ENCODE measurements at regions of chr3 and their contacts with region 1.

Region 1: DNA sequence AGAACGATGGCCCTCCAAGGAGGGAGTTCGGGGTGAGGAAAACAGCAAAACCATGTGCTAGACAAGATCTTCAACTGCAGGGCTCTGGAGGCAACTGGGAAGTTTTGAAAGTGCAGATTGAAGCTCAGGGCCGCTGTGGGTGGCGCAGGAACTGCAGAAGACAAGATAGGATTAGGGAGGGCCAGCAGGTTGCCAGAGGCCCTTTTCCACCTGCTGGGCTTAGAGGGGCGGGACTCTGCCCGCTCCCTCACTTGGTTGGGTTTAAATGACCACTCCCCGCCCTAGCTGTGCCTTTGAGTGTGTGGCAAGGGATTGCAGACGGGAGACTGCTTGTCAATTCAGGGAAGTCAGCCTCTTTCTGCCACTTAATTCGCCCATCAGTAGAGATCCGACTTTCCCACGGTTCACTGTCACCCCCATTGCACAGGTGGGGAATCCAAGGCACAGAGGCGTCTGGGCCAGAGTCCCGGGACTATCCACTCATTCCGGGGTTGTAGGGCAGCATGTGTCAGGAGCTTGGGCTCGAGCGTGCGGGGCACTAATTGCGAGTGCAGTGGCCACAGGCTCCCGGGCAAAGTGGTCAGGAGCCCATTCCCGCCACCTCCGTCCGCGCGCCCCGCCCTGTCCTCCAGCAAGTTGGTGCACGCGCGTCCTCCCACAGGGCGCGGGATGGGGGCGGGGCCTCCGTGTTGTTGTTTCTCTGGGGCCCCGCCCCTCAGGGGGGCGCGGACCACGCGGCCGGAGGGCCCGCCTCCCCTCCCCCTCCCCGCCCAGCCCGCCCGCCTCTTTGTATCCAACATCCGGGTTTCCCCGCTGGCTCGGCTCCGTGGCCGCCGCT is at the start of gene ACVR2B:
- DNase-seq: peak; percentile 95
- H3K4me3 ChIP-seq: peak within 1 kb of the TSS; percentile 81 to 93 (median 86)
- H3K27ac ChIP-seq: peak within 1 kb of the TSS; percentile 88 to 92 (median 90)
- H3K4me1 ChIP-seq: peaks cover 0 to 36% (median 31%) of the 10 kb centered on the region in 4 donors
- H3K27me3 ChIP-seq: no peaks in the 10 kb centered on the region
- CTCF ChIP-seq: no peak
- EP300 ChIP-seq: no peak
- POLR2A ChIP-seq: no peak
- total RNA-seq, gene ACVR2B: 4.8 to 9.1 (median 6.7) TPM

Region 2: GRCh38 chr3:38136777-38137614 is 316.3 kb before region 1 on chr3 and contains the start of gene ACAA1:
- intact Hi-C with region 1: loop called (anchors 5 kb)
- DNase-seq: peak; percentile 100
- H3K4me3 ChIP-seq: peak within 1 kb of the TSS; percentile 72 to 96 (median 89)
- H3K27ac ChIP-seq: peak within 1 kb of the TSS; percentile 89 to 97 (median 94)
- H3K4me1 ChIP-seq: peaks cover 0 to 60% (median 37%) of the 10 kb centered on the region in 4 donors
- H3K27me3 ChIP-seq: no peaks in the 10 kb centered on the region
- CTCF ChIP-seq: no peak
- EP300 ChIP-seq: no peak
- POLR2A ChIP-seq: peak; percentile 82 to 89
- total RNA-seq, gene ACAA1: 42.6 to 53.2 (median 47.6) TPM

Region 3: DNA sequence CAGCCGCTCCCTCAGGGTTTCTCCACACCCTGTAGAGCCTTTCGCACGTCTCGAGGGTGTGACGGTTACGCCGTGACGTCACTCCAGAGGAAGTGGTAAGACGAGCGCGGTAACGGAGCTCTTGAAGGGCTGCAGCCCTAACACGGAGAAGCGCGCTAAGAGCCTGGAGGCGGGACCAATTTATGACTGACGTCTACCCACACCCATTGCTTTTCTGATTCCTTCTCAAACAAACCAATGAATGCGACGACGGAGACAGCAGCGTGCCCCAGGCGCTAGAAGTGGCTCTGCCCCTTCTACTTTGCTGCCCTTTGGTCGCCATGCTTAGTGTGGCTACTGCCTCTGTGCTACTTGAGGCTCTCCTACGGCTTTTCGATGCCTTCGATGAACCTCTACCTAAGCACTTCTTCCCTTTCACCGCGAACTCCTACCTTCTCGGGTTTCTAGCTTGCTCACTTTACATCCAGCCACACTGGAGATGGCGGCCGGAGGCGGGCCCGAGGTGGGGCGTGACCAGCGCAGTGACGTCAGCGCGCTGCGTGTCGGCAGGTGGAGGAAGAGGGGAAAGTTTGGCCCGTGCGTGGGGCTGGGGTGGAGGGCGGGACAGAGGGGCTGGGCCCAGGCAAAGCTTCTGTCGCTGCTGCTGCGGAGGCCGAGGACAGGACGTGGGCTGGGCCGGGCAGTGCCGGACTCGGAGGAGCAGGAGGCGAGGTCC is 288.2 kb before region 1 on chr3 and contains the start of gene OXSR1:
- intact Hi-C with region 1: loop called (anchors 10 kb)
- DNase-seq: peak; percentile 100
- H3K4me3 ChIP-seq: peak within 1 kb of the TSS; percentile 73 to 98 (median 93)
- H3K27ac ChIP-seq: peak within 1 kb of the TSS; percentile 92 to 99 (median 98)
- H3K4me1 ChIP-seq: peaks cover 0 to 20% (median 19%) of the 10 kb centered on the region in 4 donors
- H3K27me3 ChIP-seq: no peaks in the 10 kb centered on the region
- CTCF ChIP-seq: no peak
- EP300 ChIP-seq: peak in 2 of 4 donors; percentile 5 to 36
- POLR2A ChIP-seq: peak; percentile 84 to 90
- total RNA-seq, gene OXSR1: 21.8 to 28.8 (median 26.2) TPM

Region 4: DNA sequence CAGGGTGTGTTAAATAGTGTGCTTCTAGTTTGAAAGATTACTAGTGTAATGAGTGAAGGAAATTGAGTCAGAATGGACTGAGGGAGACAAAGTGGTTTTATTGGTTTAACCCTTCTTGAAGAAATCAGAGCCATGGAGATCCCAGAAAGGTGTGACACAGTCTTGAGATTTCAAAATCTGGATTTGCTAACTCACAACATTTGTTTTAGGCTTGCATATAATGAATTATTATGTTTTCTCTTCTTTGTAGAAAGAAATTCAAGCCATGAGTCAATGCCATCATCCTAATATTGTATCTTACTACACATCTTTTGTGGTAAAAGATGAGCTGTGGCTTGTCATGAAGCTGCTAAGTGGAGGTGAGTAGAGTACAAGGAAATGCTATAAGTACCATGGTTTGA is 262.8 kb before region 1 on chr3:
- intact Hi-C with region 1: no loop called
- DNase-seq: no peak
- H3K4me3 ChIP-seq: no peak overlapping the region
- H3K27ac ChIP-seq: no peak overlapping the region
- H3K4me1 ChIP-seq: no peaks in the 10 kb centered on the region
- H3K27me3 ChIP-seq: no peaks in the 10 kb centered on the region
- CTCF ChIP-seq: no peak
- EP300 ChIP-seq: no peak
- POLR2A ChIP-seq: no peak

Region 5: GRCh38 chr3:38496131-38496910 is 43.0 kb after region 1 on chr3 and contains the start of gene EXOG:
- intact Hi-C with region 1: loop called (anchors 2 kb)
- DNase-seq: peak; percentile 96
- H3K4me3 ChIP-seq: peak within 1 kb of the TSS; percentile 58 to 79 (median 75)
- H3K27ac ChIP-seq: peak within 1 kb of the TSS; percentile 80 to 88 (median 85)
- H3K4me1 ChIP-seq: peaks cover 0 to 40% (median 16%) of the 10 kb centered on the region in 4 donors
- H3K27me3 ChIP-seq: no peaks in the 10 kb centered on the region
- CTCF ChIP-seq: peak; percentile 46 to 97 (median 66)
- EP300 ChIP-seq: no peak
- POLR2A ChIP-seq: no peak
- total RNA-seq, gene EXOG: 9.7 to 26.9 (median 12.8) TPM

Region 6: DNA sequence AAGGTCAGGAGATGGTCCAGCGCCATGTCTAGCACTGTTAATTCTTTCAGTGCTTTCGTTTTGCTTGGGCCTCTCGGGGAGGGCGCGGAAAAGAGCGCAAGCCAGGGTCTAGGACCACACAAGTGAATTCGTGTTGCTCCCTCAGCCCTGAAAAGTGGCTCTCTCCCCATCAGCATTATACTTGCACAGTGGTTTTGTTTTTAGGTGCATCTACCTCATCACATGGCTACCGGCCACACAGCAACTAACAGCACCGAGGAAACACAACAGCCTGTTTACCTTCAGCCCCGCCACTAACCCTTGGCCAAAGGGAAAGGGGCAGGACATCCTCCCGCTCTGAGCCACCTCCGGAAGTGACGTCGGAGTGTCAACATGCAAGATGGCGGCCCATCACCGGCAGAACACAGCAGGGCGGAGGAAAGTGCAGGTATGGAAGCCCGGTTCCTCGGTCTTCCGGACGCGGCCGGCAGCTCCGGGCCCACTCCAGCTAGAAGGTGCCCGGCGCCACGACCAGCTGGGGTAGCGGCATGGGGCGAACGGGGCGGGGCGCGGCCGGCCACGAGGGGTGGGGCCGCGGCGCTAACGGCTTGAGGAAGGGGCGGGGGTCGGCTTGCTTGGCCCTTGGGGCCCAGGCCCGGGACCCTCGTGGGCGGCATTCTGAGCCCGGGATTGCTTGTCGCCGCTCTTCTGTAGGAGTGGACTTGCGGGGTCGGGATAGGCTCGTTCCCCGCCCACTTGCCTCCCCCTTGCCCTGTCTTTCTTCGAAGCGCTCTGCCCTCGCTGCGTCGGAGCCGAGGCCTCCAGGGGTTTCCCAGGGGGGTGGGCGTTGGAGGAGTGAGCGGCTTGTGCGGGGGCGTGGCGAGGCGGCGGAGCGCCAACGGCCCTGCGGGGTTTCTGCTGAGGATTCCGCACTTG is 598.6 kb after region 1 on chr3 and contains the starts of genes SCN11A and WDR48:
- intact Hi-C with region 1: loop called (anchors 10 kb)
- DNase-seq: peak; percentile 97
- H3K4me3 ChIP-seq: peak within 1 kb of the TSS; percentile 92 to 99 (median 95)
- H3K27ac ChIP-seq: peak within 1 kb of the TSS; percentile 84 to 91 (median 87)
- H3K4me1 ChIP-seq: peaks cover 0 to 20% (median 16%) of the 10 kb centered on the region in 4 donors
- H3K27me3 ChIP-seq: no peaks in the 10 kb centered on the region
- CTCF ChIP-seq: no peak
- EP300 ChIP-seq: no peak
- POLR2A ChIP-seq: peak; percentile 69 to 83
- total RNA-seq, gene SCN11A: 0.82 to 3.0 (median 2.2) TPM
- total RNA-seq, gene WDR48: 37.4 to 50.2 (median 40.7) TPM